Activated naive CD4-positive, alpha-beta T cell treated with anti-CD3 and anti-CD28 coated beads for 36 hours (primary cell): ENCODE measurements at regions of chr11 and their contacts with region 1.

Region 1: GRCh38 chr11:46352063-46352841 is 5.0 kb downstream of the DGKZ start:
- DNase-seq: peak; percentile 81
- H3K4me3 Mint-ChIP-seq: peak overlapping the region; percentile 77
- H3K27ac Mint-ChIP-seq: peak overlapping the region; percentile 90
- H3K4me1 Mint-ChIP-seq: peaks cover 77% of the 10 kb centered on the region
- H3K27me3 Mint-ChIP-seq: no peaks in the 10 kb centered on the region

Region 2: GRCh38 chr11:46338988-46339666 is 13.1 kb before region 1 on chr11:
- CTCF ChIA-PET with region 1: interaction called, 148 read pairs
- intact Hi-C with region 1: no loop called
- DNase-seq: no peak
- H3K4me3 Mint-ChIP-seq: no peak overlapping the region
- H3K27ac Mint-ChIP-seq: peak overlapping the region; percentile 69
- H3K4me1 Mint-ChIP-seq: peaks cover 80% of the 10 kb centered on the region
- H3K27me3 Mint-ChIP-seq: no peaks in the 10 kb centered on the region

Region 3: GRCh38 chr11:46457659-46458424 is 105.6 kb after region 1 on chr11:
- CTCF ChIA-PET with region 1: no interaction called
- intact Hi-C with region 1: no loop called
- DNase-seq: no peak
- H3K4me3 Mint-ChIP-seq: no peak overlapping the region
- H3K27ac Mint-ChIP-seq: no peak overlapping the region
- H3K4me1 Mint-ChIP-seq: peaks cover 14% of the 10 kb centered on the region
- H3K27me3 Mint-ChIP-seq: no peaks in the 10 kb centered on the region

Region 4: DNA sequence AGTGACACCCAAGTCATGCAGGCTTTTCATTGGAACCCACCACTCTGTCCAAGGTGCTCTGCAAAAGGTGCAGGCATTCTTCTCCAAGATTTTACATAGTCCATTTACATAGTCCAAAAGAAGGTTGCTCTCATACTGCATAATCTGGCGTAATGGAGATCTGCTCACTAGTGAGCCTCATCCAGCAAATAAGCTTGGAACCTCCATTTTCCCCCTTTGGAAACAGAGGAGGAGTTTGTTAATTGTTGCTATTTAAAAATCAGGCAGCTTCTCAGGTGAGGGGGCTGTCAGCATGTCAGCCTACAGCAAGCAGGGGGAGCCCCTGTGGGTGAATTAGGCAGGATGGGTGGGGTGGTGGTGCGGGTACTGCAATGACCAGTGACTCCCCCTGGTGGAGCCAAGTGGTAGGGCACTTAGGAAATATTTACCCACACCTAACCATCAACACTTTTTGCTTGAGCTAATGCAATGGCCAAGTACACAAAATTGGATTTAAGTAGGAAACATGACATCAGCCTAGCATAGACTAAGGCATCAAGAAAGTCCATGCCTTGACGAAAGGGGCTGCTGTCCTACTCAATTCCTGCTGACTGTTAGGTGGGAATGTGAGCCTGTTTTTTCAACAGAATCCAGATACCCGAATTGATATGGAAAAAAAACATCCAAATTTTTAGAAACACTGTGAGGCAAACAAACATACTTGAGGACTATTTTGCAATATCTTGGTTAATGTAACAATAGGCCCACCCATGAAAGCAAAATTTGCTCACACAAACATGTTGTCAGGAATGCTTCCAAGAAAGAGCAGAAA is 177.0 kb after region 1 on chr11:
- CTCF ChIA-PET with region 1: no interaction called
- intact Hi-C with region 1: loop called (anchors 1 kb)
- DNase-seq: peak; percentile 90
- H3K4me3 Mint-ChIP-seq: no peak overlapping the region
- H3K27ac Mint-ChIP-seq: no peak overlapping the region
- H3K4me1 Mint-ChIP-seq: peaks cover 33% of the 10 kb centered on the region
- H3K27me3 Mint-ChIP-seq: no peaks in the 10 kb centered on the region